PC-3 (cell line): ENCODE measurements at regions of chr1 and their contacts with region 1.

Region 1: DNA sequence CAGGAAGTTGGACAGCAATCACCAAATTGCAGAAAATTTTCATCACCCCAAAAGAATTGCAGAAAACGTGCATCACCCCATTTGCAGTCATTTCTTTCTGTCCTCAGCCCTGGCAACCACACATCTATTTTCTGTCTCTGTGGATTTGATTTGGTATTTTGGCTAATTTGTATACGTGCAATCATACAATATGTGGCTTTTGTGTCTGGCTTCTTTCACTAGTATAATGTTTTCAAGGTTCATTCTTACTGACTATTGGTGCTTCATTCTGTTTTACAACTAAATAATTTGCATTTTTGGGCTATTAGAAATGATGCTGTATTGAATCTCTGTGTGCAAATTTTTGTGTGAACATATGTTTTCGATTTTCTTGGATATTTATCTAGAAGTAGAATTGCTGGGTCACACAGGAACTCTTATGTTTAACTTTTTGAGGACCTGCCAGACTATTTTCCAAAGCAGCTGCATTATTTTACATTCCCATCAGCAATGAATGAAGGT is 24.8 kb upstream of the PRDM2 start:
- DNase-seq: no peak
- ATAC-seq: no peak
- H3K4me3 ChIP-seq: no peak overlapping the region
- H3K27ac ChIP-seq: no peak overlapping the region
- H3K4me1 ChIP-seq: no peaks in the 10 kb centered on the region
- H3K27me3 ChIP-seq: no peaks in the 10 kb centered on the region
- CTCF ChIP-seq: no peak

Region 2: DNA sequence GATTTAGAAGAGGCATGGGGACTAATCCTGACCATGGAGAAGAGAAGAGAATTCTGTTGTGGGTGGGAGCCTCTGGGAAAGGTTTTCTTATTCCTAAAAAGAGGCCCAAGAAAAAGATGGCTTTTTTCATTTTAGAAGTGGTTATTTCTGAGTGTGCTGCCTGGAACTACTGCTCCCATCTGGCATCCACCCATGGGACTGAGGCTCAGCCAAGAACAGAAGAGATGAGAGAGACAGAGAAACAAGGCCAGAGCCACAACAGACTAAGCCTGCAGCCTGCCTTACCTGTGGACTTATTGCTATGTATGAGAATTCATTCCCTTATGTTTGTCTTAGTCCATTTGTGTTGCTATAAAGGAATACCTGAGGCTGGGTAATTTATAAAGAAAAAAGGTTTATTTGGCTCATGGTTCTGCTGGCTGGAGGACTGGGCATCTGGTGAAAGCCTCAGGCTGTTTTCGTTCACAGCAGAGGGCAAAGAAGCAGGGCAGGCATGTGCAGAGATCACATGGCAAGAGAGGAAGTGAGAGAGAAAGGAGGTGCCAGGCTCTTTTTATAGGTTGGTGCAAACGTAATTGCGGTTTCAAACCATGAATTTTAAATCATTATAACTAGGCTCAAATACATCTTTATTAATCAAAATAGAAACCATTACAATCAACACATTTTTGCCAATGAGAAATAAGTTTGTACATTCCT is 32.7 kb before region 1 on chr1:
- CTCF ChIA-PET with region 1: no interaction called
- POLR2A ChIA-PET with region 1: no interaction called
- intact Hi-C with region 1: no loop called
- DNase-seq: no peak
- ATAC-seq: no peak
- H3K4me3 ChIP-seq: no peak overlapping the region
- H3K27ac ChIP-seq: no peak overlapping the region
- H3K4me1 ChIP-seq: no peaks in the 10 kb centered on the region
- H3K27me3 ChIP-seq: no peaks in the 10 kb centered on the region
- CTCF ChIP-seq: no peak

Region 3: DNA sequence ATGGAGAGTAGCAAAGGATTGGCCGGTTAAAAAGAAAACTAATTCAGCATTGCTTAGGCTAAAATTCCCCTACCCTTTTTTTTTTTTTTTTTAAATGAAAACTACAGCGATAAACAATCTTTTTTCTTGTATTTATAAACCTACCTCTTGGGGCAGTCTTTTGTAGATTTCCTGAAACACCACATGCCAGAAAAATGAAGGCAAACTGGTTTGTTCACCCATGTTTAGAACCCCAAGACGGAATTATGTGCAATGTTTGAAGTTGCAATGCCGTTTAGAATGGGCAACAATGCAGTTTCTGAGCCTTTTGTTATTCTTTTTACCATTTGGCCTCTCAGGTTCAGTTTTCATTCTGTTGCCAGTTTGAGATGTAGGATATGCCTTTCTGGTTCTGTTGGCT is 83.9 kb after region 1 on chr1:
- CTCF ChIA-PET with region 1: no interaction called
- POLR2A ChIA-PET with region 1: interaction called, 11 read pairs
- intact Hi-C with region 1: no loop called
- DNase-seq: peak; percentile 95
- ATAC-seq: peak; percentile 51
- H3K4me3 ChIP-seq: peak overlapping the region; percentile 41; the same call in 1 of the 2 replicates
- H3K27ac ChIP-seq: peak overlapping the region; percentile 29
- H3K4me1 ChIP-seq: peaks cover 50% of the 10 kb centered on the region
- H3K27me3 ChIP-seq: no peaks in the 10 kb centered on the region
- CTCF ChIP-seq: peak; percentile 45

Region 4: GRCh38 chr1:14875524-14876509 is 1200.6 kb after region 1 on chr1:
- CTCF ChIA-PET with region 1: no interaction called
- POLR2A ChIA-PET with region 1: interaction called, 12 read pairs
- intact Hi-C with region 1: no loop called
- DNase-seq: no peak
- ATAC-seq: no peak
- H3K4me3 ChIP-seq: no peak overlapping the region
- H3K27ac ChIP-seq: no peak overlapping the region
- H3K4me1 ChIP-seq: peaks cover 9% of the 10 kb centered on the region; the same call in 1 of the 2 replicates
- H3K27me3 ChIP-seq: peaks cover 27% of the 10 kb centered on the region
- CTCF ChIP-seq: no peak